Esophagus muscularis mucosa (tissue), 4 donors: ENCODE measurements at regions of chr6 and their contacts with region 1.

Region 1: DNA sequence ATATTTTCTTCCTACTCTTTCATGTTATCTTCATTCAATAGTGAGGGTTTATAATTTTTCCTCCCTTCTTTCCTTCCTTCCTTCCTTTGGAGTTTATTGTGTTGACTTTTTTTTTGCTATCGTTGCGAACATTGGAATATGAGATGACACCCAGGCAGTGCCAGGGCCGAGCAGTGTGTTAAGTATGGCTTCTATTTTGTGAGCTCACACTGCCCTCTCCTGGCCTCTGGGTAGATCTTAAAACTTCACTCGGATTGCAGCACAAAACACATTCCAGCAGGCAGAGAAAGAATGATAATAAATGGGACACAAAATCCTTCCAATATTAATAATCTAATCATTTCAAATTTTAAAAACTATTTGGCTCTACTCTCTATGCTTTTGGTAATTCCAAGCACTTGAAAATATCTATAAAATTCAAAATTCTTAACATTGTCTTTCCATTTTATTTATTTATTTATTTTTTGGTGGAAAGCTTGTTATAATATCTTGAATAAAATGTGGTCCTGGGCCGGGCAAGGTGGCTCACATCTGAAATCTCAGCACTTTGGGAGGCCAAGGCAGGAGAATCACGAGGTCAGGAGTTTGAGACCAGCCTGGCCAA is 147.4 kb upstream of the OLIG3 start:
- DNase-seq: no peak
- H3K4me3 ChIP-seq: no peak overlapping the region
- H3K27ac ChIP-seq: no peak overlapping the region
- H3K4me1 ChIP-seq: peaks cover 0 to 16% (median 9%) of the 10 kb centered on the region in 4 donors
- H3K27me3 ChIP-seq: no peaks in the 10 kb centered on the region
- CTCF ChIP-seq: peak; percentile 65 to 78 (median 66)
- EP300 ChIP-seq: no peak
- POLR2A ChIP-seq: no peak

Region 2: GRCh38 chr6:137094411-137095008 is 547.1 kb before region 1 on chr6:
- intact Hi-C with region 1: loop called (anchors 5 kb)
- DNase-seq: no peak
- H3K4me3 ChIP-seq: no peak overlapping the region
- H3K27ac ChIP-seq: no peak overlapping the region
- H3K4me1 ChIP-seq: no peaks in the 10 kb centered on the region
- H3K27me3 ChIP-seq: peaks cover 0 to 8% (median 0%) of the 10 kb centered on the region in 4 donors
- CTCF ChIP-seq: peak; percentile 61 to 82 (median 76)
- EP300 ChIP-seq: no peak
- POLR2A ChIP-seq: no peak

Region 3: DNA sequence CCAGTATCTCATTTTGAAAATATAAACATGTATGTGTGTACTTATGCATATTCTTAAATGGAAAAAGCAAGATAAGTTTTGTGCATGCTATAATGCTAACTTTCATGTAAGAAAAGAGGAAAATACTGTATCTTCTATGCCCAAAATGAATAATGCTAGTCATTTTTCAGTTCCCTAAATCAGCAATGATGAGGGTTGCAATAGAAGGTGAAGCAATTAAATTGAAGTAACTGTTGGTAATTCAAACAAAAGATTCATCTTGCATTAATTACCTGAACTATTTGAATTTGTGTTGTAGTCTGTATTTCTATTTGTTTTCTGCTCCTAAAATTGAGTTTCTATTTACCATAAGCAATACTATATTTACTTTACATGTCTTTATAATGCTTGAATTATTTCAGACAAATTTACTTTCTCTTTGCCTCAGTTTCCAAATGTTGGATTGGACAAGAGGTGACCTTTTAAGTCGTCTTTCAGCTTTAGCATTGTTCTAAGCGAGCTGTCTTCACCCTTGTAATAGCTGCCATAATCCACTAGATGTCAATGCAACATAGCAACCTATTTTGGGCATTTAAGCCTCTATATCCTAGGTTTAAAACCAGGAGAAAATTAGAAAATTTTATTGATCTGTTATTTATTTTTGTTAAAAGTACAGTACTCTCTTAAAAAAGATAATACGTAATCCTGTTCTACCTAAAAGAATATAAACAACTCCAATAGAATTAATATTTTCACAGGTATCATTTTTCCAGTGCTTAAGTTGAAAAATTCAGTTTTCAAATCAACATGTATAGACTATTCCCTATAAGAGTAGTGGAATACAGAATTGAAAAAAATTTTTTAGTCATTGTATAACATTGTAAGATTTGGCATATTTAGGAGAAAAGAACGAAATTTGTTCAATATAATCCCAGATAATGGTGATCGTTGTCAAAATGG is 370.1 kb before region 1 on chr6:
- intact Hi-C with region 1: loop called (anchors 2 kb)
- DNase-seq: no peak
- H3K4me3 ChIP-seq: no peak overlapping the region
- H3K27ac ChIP-seq: no peak overlapping the region
- H3K4me1 ChIP-seq: peaks cover 0 to 6% (median 0%) of the 10 kb centered on the region in 4 donors
- H3K27me3 ChIP-seq: no peaks in the 10 kb centered on the region
- CTCF ChIP-seq: peak; percentile 83 to 93 (median 92)
- EP300 ChIP-seq: no peak
- POLR2A ChIP-seq: no peak

Region 4: GRCh38 chr6:137767911-137768690 is 126.5 kb after region 1 on chr6:
- intact Hi-C with region 1: no loop called
- DNase-seq: peak; percentile 26
- H3K4me3 ChIP-seq: no peak overlapping the region
- H3K27ac ChIP-seq: no peak overlapping the region
- H3K4me1 ChIP-seq: peaks cover 0 to under 1% (median 0%) of the 10 kb centered on the region in 4 donors
- H3K27me3 ChIP-seq: no peaks in the 10 kb centered on the region
- CTCF ChIP-seq: no peak
- EP300 ChIP-seq: no peak
- POLR2A ChIP-seq: no peak

Region 5: GRCh38 chr6:137783710-137784109 is 142.1 kb after region 1 on chr6:
- intact Hi-C with region 1: no loop called
- DNase-seq: no peak
- H3K4me3 ChIP-seq: no peak overlapping the region
- H3K27ac ChIP-seq: peak overlapping the region in 3 of 4 donors; percentile 37 to 88 (median 81)
- H3K4me1 ChIP-seq: peaks cover 5 to 53% (median 50%) of the 10 kb centered on the region in 4 donors
- H3K27me3 ChIP-seq: no peaks in the 10 kb centered on the region
- CTCF ChIP-seq: no peak
- EP300 ChIP-seq: no peak
- POLR2A ChIP-seq: no peak

Region 6: DNA sequence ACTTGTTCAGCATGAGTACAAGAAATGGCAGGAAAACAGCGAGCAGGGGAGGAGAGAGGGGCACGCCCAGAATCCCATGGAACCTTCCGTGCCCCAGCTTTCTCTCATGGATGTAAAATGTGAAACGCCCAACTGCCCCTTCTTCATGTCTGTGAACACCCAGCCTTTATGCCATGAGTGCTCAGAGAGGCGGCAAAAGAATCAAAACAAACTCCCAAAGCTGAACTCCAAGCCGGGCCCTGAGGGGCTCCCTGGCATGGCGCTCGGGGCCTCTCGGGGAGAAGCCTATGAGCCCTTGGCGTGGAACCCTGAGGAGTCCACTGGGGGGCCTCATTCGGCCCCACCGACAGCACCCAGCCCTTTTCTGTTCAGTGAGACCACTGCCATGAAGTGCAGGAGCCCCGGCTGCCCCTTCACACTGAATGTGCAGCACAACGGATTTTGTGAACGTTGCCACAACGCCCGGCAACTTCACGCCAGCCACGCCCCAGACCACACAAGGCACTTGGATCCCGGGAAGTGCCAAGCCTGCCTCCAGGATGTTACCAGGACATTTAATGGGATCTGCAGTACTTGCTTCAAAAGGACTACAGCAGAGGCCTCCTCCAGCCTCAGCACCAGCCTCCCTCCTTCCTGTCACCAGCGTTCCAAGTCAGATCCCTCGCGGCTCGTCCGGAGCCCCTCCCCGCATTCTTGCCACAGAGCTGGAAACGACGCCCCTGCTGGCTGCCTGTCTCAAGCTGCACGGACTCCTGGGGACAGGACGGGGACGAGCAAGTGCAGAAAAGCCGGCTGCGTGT is 237.1 kb after region 1 on chr6:
- intact Hi-C with region 1: no loop called
- DNase-seq: no peak
- H3K4me3 ChIP-seq: no peak overlapping the region
- H3K27ac ChIP-seq: peak overlapping the region; percentile 45 to 57 (median 51)
- H3K4me1 ChIP-seq: peaks cover 18 to 63% (median 54%) of the 10 kb centered on the region in 4 donors
- H3K27me3 ChIP-seq: no peaks in the 10 kb centered on the region
- CTCF ChIP-seq: peak in 1 of 3 experiments; percentile 13
- EP300 ChIP-seq: no peak
- POLR2A ChIP-seq: no peak